Calu3 (cell line): ENCODE measurements at regions of chr5 and their contacts with region 1.

Region 1: GRCh38 chr5:164532235-164532900 is 1026.9 kb downstream of the MAT2B start:
- DNase-seq: no peak
- H3K4me3 Mint-ChIP-seq: no peak overlapping the region
- H3K27ac Mint-ChIP-seq: no peak overlapping the region
- H3K4me1 Mint-ChIP-seq: no peaks in the 10 kb centered on the region
- H3K27me3 Mint-ChIP-seq: no peaks in the 10 kb centered on the region
- CTCF ChIP-seq: no peak

Region 2: GRCh38 chr5:164394686-164395194 is 137.6 kb before region 1 on chr5:
- CTCF ChIA-PET with region 1: no interaction called
- intact Hi-C with region 1: no loop called
- DNase-seq: no peak
- H3K4me3 Mint-ChIP-seq: no peak overlapping the region
- H3K27ac Mint-ChIP-seq: no peak overlapping the region
- H3K4me1 Mint-ChIP-seq: no peaks in the 10 kb centered on the region
- H3K27me3 Mint-ChIP-seq: no peaks in the 10 kb centered on the region
- CTCF ChIP-seq: no peak

Region 3: DNA sequence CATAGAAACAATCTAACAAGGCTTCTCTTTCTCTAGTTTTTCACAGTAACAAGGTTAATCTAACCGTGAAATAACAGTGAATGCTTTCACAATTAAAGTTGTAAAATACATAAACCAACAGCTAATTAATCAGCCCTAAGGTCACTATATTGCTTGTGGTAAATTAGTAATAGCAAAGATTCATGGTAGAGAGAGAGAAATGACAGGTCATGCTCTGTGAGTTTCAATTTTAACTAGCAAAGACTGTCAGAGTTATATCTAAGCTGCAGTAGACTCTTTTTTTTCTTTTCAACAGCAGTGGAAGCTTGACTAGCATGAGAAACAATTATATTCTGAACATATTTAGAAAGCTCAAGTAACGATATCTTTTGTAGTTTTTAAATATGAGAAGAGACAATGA is 41.0 kb after region 1 on chr5:
- CTCF ChIA-PET with region 1: no interaction called
- intact Hi-C with region 1: loop called (anchors 1 kb)
- DNase-seq: no peak
- H3K4me3 Mint-ChIP-seq: no peak overlapping the region
- H3K27ac Mint-ChIP-seq: no peak overlapping the region
- H3K4me1 Mint-ChIP-seq: no peaks in the 10 kb centered on the region
- H3K27me3 Mint-ChIP-seq: no peaks in the 10 kb centered on the region
- CTCF ChIP-seq: no peak

Region 4: GRCh38 chr5:164951570-164951969 is 419.2 kb after region 1 on chr5:
- CTCF ChIA-PET with region 1: interaction called, 12 read pairs
- intact Hi-C with region 1: no loop called
- DNase-seq: no peak
- H3K4me3 Mint-ChIP-seq: no peak overlapping the region
- H3K27ac Mint-ChIP-seq: no peak overlapping the region
- H3K4me1 Mint-ChIP-seq: no peaks in the 10 kb centered on the region
- H3K27me3 Mint-ChIP-seq: no peaks in the 10 kb centered on the region
- CTCF ChIP-seq: no peak